ENCODE measurements at regions of chr17 and their contacts with region 1.

Region 1: GRCh38 chr17:7862692-7863437 is 5.1 kb downstream of the CYB5D1 start:
- DNase-seq: peak; percentile 61
- ATAC-seq: no peak
- H3K4me3 Mint-ChIP-seq: no peak overlapping the region
- H3K27ac Mint-ChIP-seq: no peak overlapping the region
- H3K4me1 Mint-ChIP-seq: peaks cover 20% of the 10 kb centered on the region
- H3K27me3 Mint-ChIP-seq: no peaks in the 10 kb centered on the region

Region 2: GRCh38 chr17:7875804-7876370 is 13.0 kb after region 1 on chr17:
- CTCF ChIA-PET with region 1: interaction called, 20 read pairs
- POLR2A ChIA-PET with region 1: interaction called, 3 read pairs
- DNase-seq: no peak
- ATAC-seq: no peak
- H3K4me3 Mint-ChIP-seq: no peak overlapping the region
- H3K27ac Mint-ChIP-seq: no peak overlapping the region
- H3K4me1 Mint-ChIP-seq: peaks cover 3% of the 10 kb centered on the region
- H3K27me3 Mint-ChIP-seq: no peaks in the 10 kb centered on the region

Region 3: DNA sequence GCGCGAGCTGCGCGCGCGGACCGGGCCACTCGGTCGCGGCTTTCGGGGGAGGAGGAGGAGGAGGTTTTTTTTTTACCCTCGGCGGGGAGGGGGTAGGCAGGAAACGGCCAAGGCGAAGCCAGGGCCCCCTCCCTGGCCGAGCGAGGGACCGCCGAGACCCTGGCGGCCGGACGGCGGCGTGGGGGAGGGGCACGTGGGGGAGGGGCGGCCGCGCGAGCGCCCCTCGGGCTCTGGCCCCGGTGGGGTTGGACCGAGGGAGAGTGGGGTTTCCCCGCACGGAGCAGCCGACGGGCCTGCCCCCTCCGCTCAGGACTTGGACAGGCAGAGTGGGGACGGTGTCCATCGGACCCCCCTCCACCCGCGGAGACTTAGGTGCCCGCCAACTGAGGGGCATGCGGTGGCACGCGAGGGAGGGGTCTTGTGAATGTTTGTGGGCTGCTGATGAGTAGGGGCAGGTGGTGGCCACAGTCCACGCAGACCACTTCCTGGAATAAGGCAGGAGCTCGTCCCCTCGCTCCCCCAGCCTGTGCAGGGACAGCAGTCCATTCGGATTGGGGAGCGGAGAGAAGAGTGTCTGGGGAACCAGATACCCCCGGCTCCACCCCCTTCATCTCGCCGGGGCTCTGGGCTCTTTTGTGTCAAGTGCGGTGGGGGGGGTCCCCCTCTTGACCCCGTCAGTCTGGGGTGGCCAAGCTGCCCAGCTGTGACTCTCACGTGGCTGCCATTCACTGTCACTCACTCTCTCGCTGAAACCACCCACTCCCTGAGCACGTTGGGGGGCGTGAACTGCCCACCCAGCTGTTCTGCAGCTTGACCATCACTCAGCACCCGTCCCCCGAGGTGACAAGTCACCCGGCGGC is 22.7 kb after region 1 on chr17:
- CTCF ChIA-PET with region 1: interaction called, 10 read pairs
- POLR2A ChIA-PET with region 1: interaction called, 9 read pairs
- DNase-seq: peak; percentile 60
- ATAC-seq: peak; percentile 8
- H3K4me3 Mint-ChIP-seq: peak overlapping the region; percentile 61
- H3K27ac Mint-ChIP-seq: peak overlapping the region; percentile 61
- H3K4me1 Mint-ChIP-seq: peaks cover 3% of the 10 kb centered on the region
- H3K27me3 Mint-ChIP-seq: no peaks in the 10 kb centered on the region

Region 4: GRCh38 chr17:7897773-7898172 is 34.9 kb after region 1 on chr17:
- CTCF ChIA-PET with region 1: interaction called, 19 read pairs
- POLR2A ChIA-PET with region 1: no interaction called
- DNase-seq: no peak
- ATAC-seq: no peak
- H3K4me3 Mint-ChIP-seq: no peak overlapping the region
- H3K27ac Mint-ChIP-seq: peak overlapping the region; percentile 0
- H3K4me1 Mint-ChIP-seq: peaks cover 12% of the 10 kb centered on the region
- H3K27me3 Mint-ChIP-seq: no peaks in the 10 kb centered on the region

Region 5: DNA sequence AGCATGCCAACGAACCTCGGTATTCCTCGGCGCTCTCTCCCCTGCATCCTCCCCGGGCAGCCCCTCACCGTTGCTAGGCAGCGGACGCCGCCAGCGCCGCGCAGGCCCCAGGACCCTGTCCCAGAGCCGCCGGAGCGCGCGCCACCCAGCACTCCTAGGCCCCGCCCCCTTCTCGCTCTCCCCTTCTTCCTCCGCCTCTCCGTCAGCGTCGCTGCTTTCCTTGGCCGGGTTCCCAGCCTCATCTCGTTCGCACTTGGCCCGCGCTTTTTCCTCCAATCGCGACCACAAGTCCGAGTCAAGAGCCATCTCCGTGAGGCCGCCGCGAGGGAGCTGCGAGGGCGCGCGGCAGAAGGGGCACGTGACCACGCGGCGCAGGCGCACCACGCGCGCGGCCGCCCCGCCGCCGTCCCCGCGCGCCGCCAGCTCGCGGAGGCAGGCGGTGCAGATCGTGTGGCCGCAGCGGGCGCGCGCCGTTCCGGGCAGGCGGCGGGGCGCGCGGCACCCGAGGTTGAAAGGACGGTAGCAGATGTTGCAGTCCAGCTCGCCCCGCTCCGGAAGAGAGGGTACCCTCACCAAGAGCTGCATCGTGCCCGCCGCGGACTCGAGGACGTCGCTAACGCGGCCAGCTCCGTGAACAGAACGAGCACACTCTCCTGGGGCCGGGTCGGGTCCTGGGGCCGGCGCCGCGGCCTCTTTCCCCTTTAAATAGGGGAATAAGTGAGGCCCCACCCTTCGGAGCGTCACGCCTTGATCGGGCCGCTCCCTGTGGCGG is 52.9 kb after region 1 on chr17 and contains the start of gene RNF227:
- CTCF ChIA-PET with region 1: interaction called, 21 read pairs
- POLR2A ChIA-PET with region 1: no interaction called
- DNase-seq: peak; percentile 89
- ATAC-seq: peak; percentile 85
- H3K4me3 Mint-ChIP-seq: peak within 1 kb of the TSS; percentile 85
- H3K27ac Mint-ChIP-seq: peak within 1 kb of the TSS; percentile 95
- H3K4me1 Mint-ChIP-seq: peaks cover 35% of the 10 kb centered on the region
- H3K27me3 Mint-ChIP-seq: no peaks in the 10 kb centered on the region
- total RNA-seq, gene RNF227: 4.2 TPM

Region 6: GRCh38 chr17:7959503-7960253 is 96.8 kb after region 1 on chr17:
- CTCF ChIA-PET with region 1: no interaction called
- POLR2A ChIA-PET with region 1: no interaction called
- DNase-seq: no peak
- ATAC-seq: no peak
- H3K4me3 Mint-ChIP-seq: no peak overlapping the region
- H3K27ac Mint-ChIP-seq: no peak overlapping the region
- H3K4me1 Mint-ChIP-seq: no peaks in the 10 kb centered on the region
- H3K27me3 Mint-ChIP-seq: peaks cover 16% of the 10 kb centered on the region

Measured in activated CD8-positive, alpha-beta T cell treated with anti-CD3 and anti-CD28 coated beads, Interleukin-2, amount 10 ng/mL, durations not matched to agents 7 days and 5 days (primary cell).